ENCODE measurements at regions of chr10 and their contacts with region 1.

Region 1: GRCh38 chr10:122142641-122143237 is 128.4 kb upstream of the BTBD16 start:
- DNase-seq: peak in 8 of 10 donors; percentile 54 to 81 (median 70)
- H3K4me3 ChIP-seq: peak overlapping the region in 30 of 59 donors; percentile 5 to 60 (median 30)
- H3K27ac ChIP-seq: peak overlapping the region in 23 of 59 donors; percentile 2 to 71 (median 44)
- H3K27me3 ChIP-seq: no peaks in the 10 kb centered on the region
- CTCF ChIP-seq: peak in 55 of 56 donors; percentile 85 to 99 (median 98)

Region 2: DNA sequence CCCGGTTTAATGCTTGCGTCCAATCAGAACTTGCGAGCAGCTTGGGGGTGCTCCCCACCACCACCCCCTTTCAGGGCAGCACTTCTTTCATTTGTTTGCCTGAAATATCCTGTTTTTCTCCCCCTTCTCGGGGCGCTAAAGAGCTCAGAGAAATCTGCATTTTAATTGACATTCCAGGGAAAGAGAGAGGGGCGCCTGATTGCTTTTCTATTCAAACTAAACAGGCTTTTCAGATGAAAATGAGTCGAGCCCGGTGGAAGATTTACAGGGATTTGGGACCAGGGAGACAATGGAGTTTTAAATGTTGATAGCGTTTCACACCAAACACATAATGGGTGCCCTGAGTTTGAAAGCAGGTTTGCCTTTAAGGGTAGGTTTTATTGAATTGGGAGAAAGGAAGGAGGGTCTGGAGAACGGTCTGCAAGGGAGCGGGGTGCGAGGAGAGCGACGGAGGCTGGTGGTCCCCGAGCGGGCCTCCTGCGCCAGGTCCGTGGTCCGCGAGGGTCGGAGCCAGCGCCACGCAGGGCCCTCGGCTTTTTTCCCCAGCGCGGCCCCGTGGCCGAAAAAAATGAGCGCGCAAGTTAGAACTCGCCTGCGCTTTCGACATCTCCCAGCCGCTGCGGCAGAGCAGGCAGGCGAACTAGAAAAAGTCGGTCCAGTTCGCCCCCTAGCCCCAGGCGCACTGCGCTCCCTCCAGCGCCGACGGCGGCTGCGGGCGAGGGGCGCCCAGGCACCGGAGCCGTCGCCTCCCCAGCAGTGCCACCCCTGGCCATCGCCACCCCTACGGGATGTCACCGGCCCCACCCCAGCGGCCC is 545.8 kb before region 1 on chr10:
- intact Hi-C with region 1: no loop called
- DNase-seq: peak in 8 of 10 donors; percentile 9 to 80 (median 64)
- H3K4me3 ChIP-seq: peak overlapping the region; percentile 49 to 88 (median 75)
- H3K27ac ChIP-seq: peak overlapping the region; percentile 83 to 99 (median 96)
- H3K27me3 ChIP-seq: peaks cover 0 to 24% (median 2%) of the 10 kb centered on the region in 45 donors
- CTCF ChIP-seq: peak in 54 of 56 donors; percentile 19 to 81 (median 57)

Region 3: DNA sequence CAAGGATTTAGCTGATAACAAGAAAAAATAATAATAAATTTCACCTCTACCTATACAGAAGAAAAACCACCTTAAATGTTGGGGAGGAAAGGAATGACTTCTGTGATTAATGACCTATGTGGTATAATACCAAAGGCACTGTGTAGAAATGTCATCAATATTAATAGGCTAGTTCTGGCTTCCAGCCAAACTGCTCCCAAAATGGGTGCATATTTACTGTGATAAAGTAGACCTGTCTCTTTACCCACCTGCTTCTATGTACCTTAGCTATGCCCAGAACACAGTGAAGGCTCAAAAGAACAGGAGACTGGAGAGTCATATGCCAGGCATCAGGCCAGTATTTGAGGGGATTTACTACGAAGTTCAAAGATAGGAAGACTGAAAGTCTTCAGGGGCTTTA is 291.0 kb before region 1 on chr10:
- intact Hi-C with region 1: no loop called
- DNase-seq: no peak
- H3K4me3 ChIP-seq: no peak overlapping the region
- H3K27ac ChIP-seq: no peak overlapping the region
- H3K27me3 ChIP-seq: no peaks in the 10 kb centered on the region
- CTCF ChIP-seq: no peak

Region 4: DNA sequence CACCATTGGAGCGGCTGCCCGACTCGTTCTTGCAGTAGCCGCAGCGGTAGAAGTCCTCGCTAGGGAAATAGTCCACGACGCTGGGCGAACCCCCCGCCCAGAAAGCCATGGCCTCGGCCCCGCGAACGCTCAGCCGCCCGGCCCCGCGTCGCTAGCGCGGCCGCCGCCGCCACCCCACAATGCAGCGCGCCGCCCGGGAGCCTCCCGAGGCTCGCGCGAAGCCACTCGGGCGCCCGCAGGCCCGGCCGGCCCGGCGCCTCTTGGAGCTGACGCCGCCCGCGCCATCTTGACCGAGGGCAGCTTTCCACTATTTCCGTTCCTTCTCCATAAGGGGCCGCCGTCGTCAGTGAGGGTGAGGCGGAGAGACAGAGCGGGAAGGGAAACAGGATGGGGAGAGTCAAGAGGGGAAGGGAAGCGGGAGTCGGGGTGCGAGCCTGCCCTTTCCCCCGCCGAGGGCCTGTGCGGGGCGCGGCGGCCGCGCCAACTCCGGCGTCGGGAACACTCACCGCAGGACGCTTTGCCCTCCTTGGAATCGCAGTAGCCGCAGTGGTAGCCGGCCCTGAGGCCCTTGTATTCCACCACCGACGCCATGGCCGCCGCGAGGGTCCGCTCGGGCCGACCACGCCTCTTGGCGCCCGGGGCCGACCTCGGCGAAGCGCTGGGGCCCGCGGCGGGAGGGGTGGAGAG is 214.8 kb before region 1 on chr10 and contains the start of gene ATE1:
- intact Hi-C with region 1: loop called in 1 of 2 experiments (anchors 5 kb)
- DNase-seq: peak; percentile 77 to 92 (median 90)
- H3K4me3 ChIP-seq: peak within 1 kb of the TSS; percentile 62 to 99 (median 97)
- H3K27ac ChIP-seq: peak within 1 kb of the TSS; percentile 78 to 100 (median 99)
- H3K27me3 ChIP-seq: no peaks in the 10 kb centered on the region
- CTCF ChIP-seq: peak in 33 of 56 donors; percentile 3 to 48 (median 22)
- total RNA-seq, gene ATE1: 50.0 to 91.0 (median 68.8) TPM

Region 5: GRCh38 chr10:122213766-122214165 is 71.0 kb after region 1 on chr10:
- intact Hi-C with region 1: loop called (anchors 1 to 5 kb)
- DNase-seq: peak in 9 of 10 donors; percentile 58 to 75 (median 70)
- H3K4me3 ChIP-seq: no peak overlapping the region
- H3K27ac ChIP-seq: peak overlapping the region in 3 of 59 donors; percentile 26 to 39 (median 39)
- H3K27me3 ChIP-seq: no peaks in the 10 kb centered on the region
- CTCF ChIP-seq: peak in 54 of 56 donors; percentile 12 to 73 (median 48)

Region 6: DNA sequence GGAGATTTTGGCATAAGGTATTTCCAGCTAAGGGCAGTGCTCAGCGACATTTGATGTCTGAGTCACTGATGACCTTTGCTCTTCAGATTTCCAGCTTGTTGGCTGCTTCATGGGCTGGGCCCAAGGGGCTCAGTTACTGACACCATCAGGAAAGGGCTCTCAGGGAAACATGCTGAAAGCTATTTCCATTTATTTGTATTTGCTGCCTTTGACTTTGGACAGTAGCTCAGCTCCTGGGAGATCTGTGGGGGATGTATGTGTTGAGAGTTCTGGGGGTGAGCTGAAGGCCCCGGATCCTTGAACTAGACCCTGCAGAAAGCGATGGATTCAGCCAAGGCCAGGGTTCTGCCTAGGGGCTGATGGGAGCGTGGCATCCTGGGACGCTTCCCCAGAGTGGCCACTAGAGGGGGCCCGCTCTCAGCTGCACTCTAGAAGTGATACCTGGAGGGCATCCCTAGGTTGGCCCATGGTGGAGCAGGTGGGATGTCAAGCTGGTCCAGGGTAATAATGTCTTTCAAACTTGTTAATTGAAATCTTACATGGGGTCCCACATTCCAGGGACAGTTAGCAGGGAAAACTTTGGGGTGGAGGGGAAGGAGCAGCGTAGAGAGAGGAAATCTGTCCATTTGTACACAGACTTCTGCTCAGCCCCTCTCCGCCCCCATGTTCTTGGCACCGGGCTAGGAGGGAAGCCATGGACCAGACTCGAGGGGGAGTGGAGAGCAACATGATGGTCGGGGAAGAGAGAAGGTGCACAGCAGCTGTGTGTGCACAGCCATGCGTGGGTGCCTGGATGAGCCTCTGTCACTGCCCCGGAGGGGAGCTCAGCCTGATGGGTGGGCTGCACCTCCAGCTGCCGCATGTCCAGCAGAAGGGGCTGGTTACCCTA is 125.4 kb after region 1 on chr10:
- intact Hi-C with region 1: loop called in 1 of 2 experiments (anchors 5 kb)
- DNase-seq: peak in 8 of 10 donors; percentile 42 to 69 (median 53)
- H3K4me3 ChIP-seq: no peak overlapping the region
- H3K27ac ChIP-seq: no peak overlapping the region
- H3K27me3 ChIP-seq: no peaks in the 10 kb centered on the region
- CTCF ChIP-seq: peak; percentile 36 to 96 (median 86)

Region 7: DNA sequence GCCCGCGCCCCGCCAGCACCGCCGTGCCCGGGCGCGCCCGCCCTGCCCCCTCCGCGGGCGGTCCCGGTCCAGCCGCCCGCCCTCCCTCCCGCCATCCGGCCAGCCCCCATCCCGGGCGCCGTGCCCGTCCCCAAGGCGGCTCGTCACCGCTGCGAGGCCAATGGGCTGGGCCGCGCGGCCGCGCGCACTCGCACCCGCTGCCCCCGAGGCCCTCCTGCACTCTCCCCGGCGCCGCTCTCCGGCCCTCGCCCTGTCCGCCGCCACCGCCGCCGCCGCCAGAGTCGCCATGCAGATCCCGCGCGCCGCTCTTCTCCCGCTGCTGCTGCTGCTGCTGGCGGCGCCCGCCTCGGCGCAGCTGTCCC is 318.6 kb after region 1 on chr10 and contains the start of gene HTRA1:
- intact Hi-C with region 1: loop called in 1 of 2 experiments (anchors 10 kb)
- DNase-seq: peak; percentile 40 to 92 (median 84)
- H3K4me3 ChIP-seq: peak within 1 kb of the TSS; percentile 49 to 94 (median 84)
- H3K27ac ChIP-seq: peak within 1 kb of the TSS; percentile 74 to 98 (median 92)
- H3K27me3 ChIP-seq: no peaks in the 10 kb centered on the region
- CTCF ChIP-seq: no peak
- total RNA-seq, gene HTRA1: 154 to 492 (median 263) TPM

Region 8: DNA sequence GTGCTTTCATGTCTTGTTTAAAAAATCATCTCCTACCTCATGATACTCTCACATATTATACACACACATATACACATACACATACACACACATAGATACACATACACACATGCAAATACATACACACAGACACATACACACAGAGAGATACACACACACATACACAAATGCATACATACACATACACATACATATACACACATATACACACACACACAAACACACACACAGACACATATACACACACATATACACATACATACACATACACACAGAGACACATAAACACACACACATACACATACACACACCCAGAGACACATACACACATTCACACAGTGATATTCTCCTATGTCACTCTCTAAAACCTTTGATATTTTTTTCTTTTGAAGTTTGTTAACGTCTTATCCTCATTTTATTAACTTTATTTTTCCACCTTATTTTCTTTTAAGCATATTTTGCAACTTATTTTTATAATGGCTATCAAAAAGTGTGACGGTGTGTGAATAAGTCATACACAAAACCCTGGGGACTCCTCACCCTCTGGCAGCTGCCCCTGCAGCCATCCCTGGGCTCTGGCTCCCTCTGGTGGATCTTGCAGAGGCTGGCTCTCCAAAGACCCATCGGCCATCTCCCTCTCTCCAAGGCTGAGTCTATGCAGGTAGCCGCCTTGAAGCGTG is 560.8 kb after region 1 on chr10:
- intact Hi-C with region 1: loop called in 1 of 2 experiments (anchors 10 kb)
- DNase-seq: peak; percentile 30 to 88 (median 76)
- H3K4me3 ChIP-seq: no peak overlapping the region
- H3K27ac ChIP-seq: peak overlapping the region in 2 of 59 donors; percentile 57 to 75
- H3K27me3 ChIP-seq: peaks cover 0 to 4% (median 0%) of the 10 kb centered on the region in 45 donors
- CTCF ChIP-seq: peak in 55 of 56 donors; percentile 26 to 97 (median 89)